ENCODE measurements at regions of chr7 and their contacts with region 1.

Region 1: DNA sequence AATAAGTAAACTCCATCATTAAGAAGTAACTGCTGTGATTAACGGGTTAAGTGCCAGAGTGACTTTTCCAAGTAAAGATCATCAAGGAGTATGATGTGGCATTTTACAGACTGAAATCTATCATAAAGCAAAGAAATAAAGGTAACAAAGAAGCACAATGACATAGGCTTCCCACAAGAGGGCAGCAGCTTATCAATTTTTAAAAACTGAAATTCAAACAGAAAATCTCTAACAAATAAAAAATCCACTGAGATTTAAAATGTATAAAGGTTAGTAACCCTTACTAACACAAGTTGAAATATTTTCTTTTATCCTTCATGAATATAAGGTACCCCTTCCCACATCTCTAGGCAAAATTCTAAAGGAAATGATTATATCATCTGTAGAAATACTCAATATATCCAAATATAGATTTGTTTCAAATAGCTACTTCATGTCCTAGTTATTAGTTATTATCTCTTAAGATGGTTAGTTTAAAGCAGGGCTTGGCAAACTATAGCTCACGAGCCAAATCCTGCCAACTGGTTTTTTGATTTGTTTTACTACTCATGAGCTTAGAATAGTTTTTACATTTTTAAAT is 29.2 kb downstream of the FAM3C start:
- DNase-seq: peak; percentile 74
- ATAC-seq: no peak
- H3K4me3 ChIP-seq: no peak overlapping the region
- H3K4me3 Mint-ChIP-seq: peak overlapping the region; percentile 6
- H3K27ac ChIP-seq: peak overlapping the region in 1 of 2 donors; percentile 76
- H3K27ac Mint-ChIP-seq: peak overlapping the region; percentile 44
- H3K4me1 ChIP-seq: peaks cover 42 to 46% of the 10 kb centered on the region in 2 donors
- H3K4me1 Mint-ChIP-seq: peaks cover 55% of the 10 kb centered on the region
- H3K27me3 ChIP-seq: no peaks in the 10 kb centered on the region
- H3K27me3 Mint-ChIP-seq: no peaks in the 10 kb centered on the region
- CTCF ChIP-seq: peak; percentile 92

Region 2: DNA sequence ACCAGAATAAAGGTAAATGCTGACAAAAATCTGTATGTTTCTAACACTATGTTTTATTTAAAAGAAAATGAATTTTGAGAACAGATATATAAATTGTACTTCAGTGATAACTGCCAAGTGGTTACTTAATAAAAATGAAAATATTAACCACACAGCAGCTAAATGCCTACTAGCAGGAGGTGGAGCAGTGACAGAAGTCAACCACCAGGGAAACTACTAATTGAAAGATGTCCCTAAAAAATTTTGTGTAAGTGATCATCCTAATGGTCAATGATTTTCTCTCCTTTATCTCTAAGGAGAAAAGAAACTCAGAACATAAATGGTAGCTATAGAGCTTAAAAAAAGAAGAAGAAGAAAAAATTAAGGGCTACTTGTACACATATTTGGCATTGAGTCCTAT is 15.3 kb before region 1 on chr7:
- CTCF ChIA-PET with region 1: interaction called, 30 read pairs
- POLR2A ChIA-PET with region 1: no interaction called
- intact Hi-C with region 1: no loop called
- DNase-seq: no peak
- ATAC-seq: peak; percentile 28
- H3K4me3 ChIP-seq: no peak overlapping the region
- H3K4me3 Mint-ChIP-seq: no peak overlapping the region
- H3K27ac ChIP-seq: peak overlapping the region in 1 of 2 donors; percentile 29
- H3K27ac Mint-ChIP-seq: peak overlapping the region; percentile 80
- H3K4me1 ChIP-seq: no peaks in the 10 kb centered on the region
- H3K4me1 Mint-ChIP-seq: peaks cover 8% of the 10 kb centered on the region
- H3K27me3 ChIP-seq: no peaks in the 10 kb centered on the region
- H3K27me3 Mint-ChIP-seq: no peaks in the 10 kb centered on the region
- CTCF ChIP-seq: peak; percentile 35

Region 3: GRCh38 chr7:121440857-121441503 is 74.0 kb after region 1 on chr7:
- CTCF ChIA-PET with region 1: interaction called, 29 read pairs
- POLR2A ChIA-PET with region 1: interaction called, 9 read pairs
- intact Hi-C with region 1: loop called (anchors 2 kb)
- DNase-seq: peak; percentile 40
- ATAC-seq: peak; percentile 39
- H3K4me3 ChIP-seq: peak overlapping the region in 4 of 5 experiments; percentile 7 to 39 (median 27)
- H3K4me3 Mint-ChIP-seq: peak overlapping the region; percentile 78
- H3K27ac ChIP-seq: peak overlapping the region; percentile 44 to 51
- H3K27ac Mint-ChIP-seq: peak overlapping the region; percentile 85
- H3K4me1 ChIP-seq: peaks cover 19 to 30% of the 10 kb centered on the region in 2 donors
- H3K4me1 Mint-ChIP-seq: peaks cover 36% of the 10 kb centered on the region
- H3K27me3 ChIP-seq: no peaks in the 10 kb centered on the region
- H3K27me3 Mint-ChIP-seq: no peaks in the 10 kb centered on the region
- CTCF ChIP-seq: no peak

Region 4: GRCh38 chr7:121541457-121541856 is 174.5 kb after region 1 on chr7:
- CTCF ChIA-PET with region 1: interaction called, 169 read pairs
- POLR2A ChIA-PET with region 1: no interaction called
- intact Hi-C with region 1: no loop called
- DNase-seq: no peak
- ATAC-seq: no peak
- H3K4me3 ChIP-seq: no peak overlapping the region
- H3K4me3 Mint-ChIP-seq: no peak overlapping the region
- H3K27ac ChIP-seq: no peak overlapping the region
- H3K27ac Mint-ChIP-seq: no peak overlapping the region
- H3K4me1 ChIP-seq: no peaks in the 10 kb centered on the region
- H3K4me1 Mint-ChIP-seq: peaks cover 9% of the 10 kb centered on the region
- H3K27me3 ChIP-seq: peaks cover 0 to 3% (median 0%) of the 10 kb centered on the region in 4 experiments
- H3K27me3 Mint-ChIP-seq: peaks cover 10% of the 10 kb centered on the region
- CTCF ChIP-seq: no peak

Region 5: DNA sequence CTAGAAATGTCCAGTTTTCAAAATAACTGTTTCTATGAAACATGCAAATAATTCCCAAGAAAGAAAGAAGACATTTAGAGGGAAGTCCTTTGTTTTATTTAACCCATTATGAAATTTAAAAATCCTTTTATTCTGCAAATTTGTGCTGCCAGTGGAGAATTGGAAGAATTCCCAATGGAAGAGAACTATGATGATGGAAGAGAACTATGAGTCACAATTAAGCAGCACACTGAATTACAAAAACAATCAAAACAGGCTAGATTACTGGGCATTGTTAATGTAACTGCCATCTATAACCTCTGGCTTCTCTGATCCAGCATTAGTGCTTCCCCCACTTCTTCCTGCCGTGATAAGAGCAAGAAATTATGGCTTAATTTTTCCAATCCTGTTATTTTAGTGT is 1063.8 kb after region 1 on chr7:
- CTCF ChIA-PET with region 1: no interaction called
- POLR2A ChIA-PET with region 1: no interaction called
- intact Hi-C with region 1: no loop called
- DNase-seq: no peak
- ATAC-seq: no peak
- H3K4me3 ChIP-seq: no peak overlapping the region
- H3K4me3 Mint-ChIP-seq: no peak overlapping the region
- H3K27ac ChIP-seq: no peak overlapping the region
- H3K27ac Mint-ChIP-seq: no peak overlapping the region
- H3K4me1 ChIP-seq: no peaks in the 10 kb centered on the region
- H3K4me1 Mint-ChIP-seq: no peaks in the 10 kb centered on the region
- H3K27me3 ChIP-seq: no peaks in the 10 kb centered on the region
- H3K27me3 Mint-ChIP-seq: no peaks in the 10 kb centered on the region
- CTCF ChIP-seq: no peak

Measured in B cell (primary cell).